ENCODE measurements at regions of chr1 and their contacts with region 1.

Region 1: GRCh38 chr1:54488779-54489626 is 59.0 kb upstream of the ACOT11 start:
- DNase-seq: peak; percentile 52 to 92 (median 84)

Region 2: DNA sequence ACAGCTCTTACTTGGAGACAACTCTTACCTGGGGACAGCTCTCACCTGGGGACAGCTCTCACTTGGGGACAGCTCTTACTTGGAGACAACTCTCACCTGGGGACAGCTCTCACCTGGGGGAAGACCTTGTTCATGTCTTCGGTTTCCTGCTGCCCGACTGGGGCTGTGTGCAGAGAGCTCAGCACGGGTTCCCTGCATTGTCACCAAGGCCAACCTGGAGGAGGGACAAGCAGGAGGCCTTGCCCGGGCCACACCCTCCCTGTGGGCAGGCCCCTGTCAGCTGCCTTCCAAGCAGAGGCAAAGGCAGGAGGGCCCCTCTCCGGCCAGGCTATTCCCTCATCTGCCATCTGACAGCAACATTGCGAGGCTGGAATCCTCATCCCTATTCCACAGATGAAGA is 471.0 kb before region 1 on chr1 and contains the start of gene LDLRAD1:
- intact Hi-C with region 1: no loop called
- DNase-seq: peak in 4 of 42 donors; percentile 9 to 22 (median 13)

Region 3: DNA sequence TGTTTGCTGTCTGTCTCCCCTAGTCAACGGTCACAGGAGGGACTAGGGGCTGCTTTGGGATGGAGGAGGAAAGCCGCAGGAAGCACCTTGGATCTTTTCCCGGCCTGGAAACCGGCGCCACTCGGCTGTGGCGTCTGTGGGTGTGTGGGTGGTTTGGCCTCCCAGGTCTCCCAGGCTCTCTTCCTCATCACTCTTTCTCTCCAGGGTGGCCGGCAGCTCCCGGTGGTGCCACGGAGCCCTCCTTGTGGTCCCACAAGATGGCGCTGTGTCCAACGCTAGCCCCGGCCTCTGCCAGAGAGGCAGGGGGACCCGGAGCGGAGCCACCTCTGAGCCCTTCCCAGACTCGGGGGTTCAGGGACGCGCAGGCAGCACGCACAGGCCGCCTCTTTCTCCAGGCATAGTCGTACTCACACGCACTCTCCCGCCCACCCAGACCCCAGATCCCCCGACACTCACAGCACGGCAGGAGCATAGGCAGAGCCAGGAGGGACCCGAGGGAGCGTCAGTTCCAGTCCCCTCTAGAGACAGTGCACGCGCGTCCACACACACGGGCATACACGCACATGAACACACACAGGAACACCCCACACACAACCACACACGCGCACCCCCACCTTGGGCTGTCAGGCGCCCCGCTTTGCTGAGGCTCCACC is 367.4 kb before region 1 on chr1:
- intact Hi-C with region 1: loop called (anchors 5 kb)
- DNase-seq: peak; percentile 67 to 93 (median 85)

Region 4: GRCh38 chr1:54273092-54273794 is 215.8 kb before region 1 on chr1:
- intact Hi-C with region 1: loop called (anchors 10 kb)
- DNase-seq: peak; percentile 43 to 90 (median 79)

Region 5: DNA sequence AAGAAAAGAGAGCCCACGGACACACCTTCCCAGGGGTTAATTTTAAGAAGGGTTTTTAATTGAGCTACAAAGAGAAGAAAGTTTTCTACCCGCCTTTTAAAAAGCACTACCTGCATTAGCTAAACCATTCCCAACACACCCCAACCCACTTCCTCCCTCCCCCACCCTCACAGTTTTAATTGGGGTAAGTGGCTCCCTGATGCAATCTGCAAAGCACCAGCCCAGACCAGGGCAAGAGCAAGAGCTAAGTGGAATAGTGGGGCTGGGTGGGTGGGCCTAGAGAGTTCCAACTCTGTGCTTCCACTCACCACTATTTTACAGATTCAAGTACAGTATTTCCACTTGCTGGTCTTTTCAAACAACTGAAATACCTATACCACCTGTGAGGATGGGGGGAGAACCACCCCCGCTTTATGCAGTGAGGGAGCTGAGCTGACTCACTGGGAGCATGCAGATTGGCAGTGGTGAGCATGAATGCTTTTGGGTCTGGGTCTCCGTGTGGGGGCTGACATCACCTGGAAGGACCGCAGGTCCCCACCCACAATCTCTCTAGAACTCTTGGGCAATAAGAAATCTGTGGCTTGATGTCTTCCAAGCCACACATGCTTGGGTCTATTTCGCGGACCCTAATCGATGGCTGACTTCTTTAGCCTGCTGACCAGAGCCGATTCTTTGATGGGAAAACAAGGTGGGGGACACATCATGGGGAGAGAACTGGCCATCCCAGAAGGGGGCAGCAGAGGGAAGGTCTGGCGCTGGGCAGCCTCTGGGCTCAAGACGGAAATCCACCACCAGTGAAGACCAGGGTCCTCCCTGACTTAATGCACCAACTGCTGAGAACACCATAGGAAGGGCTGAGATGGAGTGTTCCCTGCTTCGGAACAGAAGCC is 178.3 kb before region 1 on chr1:
- intact Hi-C with region 1: loop called (anchors 10 kb)
- DNase-seq: peak in 33 of 42 donors; percentile 41 to 83 (median 61)

Region 6: GRCh38 chr1:54355931-54356679 is 132.9 kb before region 1 on chr1:
- intact Hi-C with region 1: no loop called
- DNase-seq: peak in 9 of 42 donors; percentile 20 to 60 (median 45)

Region 7: DNA sequence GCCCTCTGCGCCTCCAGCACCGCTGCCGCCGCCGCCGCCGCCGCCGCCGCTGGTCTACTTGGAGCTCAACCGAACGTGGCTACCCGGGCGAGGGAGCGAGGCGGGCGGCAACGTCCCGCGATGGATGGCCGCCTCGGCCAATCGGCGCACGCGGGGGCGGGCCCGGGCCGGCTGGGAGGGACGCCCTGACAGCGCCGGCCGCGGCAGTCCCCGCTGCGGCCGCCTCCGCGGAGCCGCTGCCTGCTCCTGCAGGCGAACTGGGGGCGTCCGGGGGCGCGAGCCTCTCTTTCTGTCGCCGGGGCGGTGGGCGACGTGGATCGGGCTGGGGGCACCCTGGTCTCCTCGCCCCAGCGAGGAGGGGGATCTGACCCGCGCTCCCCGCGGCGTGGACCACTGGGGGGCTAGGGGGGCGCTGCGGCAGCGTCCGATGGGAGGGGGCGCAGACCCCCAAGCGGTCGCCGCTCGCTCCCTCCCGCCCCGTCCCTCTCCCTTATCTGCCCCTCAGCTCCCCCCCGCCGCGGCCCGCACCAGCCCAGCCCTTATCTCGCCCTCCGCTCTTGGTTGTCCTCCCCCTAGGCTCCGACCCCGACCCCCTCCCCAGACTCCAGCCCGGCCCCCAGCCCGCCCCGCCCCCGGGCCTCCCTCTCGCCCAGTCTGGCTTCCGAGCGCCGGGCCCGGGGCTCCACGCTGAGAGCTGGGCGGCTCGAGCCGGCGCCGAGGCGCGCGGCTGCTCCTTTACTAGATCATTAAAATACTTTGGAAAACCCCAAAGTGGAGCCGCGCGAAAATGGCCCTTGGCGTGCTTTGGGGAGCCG is 82.5 kb before region 1 on chr1 and contains the start of gene SSBP3:
- intact Hi-C with region 1: loop called (anchors 1 kb)
- DNase-seq: peak; percentile 77 to 97 (median 94)

Region 8: GRCh38 chr1:54615531-54616279 is 126.7 kb after region 1 on chr1:
- intact Hi-C with region 1: no loop called
- DNase-seq: no peak